ENCODE measurements at regions of chr12 and their contacts with region 1.

Region 1: DNA sequence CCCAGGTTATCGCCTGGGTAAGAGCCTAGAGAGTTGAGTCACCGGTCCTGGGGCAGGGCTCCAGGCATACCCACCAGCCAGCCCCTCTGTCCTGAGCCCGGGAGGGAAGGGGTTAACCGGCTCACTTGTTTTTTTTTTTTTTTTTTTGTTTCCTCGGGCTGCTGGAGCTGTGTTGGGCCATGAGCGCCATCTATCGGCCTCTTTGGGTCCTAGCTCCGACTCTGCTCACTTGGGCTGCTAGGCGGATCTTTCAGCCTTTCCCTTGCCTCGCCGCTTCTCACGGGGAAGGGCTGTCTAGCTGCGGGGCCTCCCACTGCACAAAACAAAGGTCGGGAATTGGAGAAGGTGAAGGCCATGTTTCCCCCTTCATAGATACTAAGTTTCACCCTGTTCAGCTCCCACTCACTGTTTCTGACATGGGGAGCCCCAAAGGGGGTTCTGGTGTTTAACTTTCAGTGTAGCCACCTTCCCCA is 2.8 kb upstream of the SMUG1 start:
- DNase-seq: peak; percentile 90
- ATAC-seq: peak; percentile 64
- H3K4me3 ChIP-seq: no peak overlapping the region
- H3K4me3 Mint-ChIP-seq: no peak overlapping the region
- H3K27ac ChIP-seq: no peak overlapping the region
- H3K27ac Mint-ChIP-seq: peak overlapping the region; percentile 61
- H3K4me1 ChIP-seq: peaks cover 27 to 42% of the 10 kb centered on the region in 2 donors
- H3K4me1 Mint-ChIP-seq: peaks cover 41% of the 10 kb centered on the region
- H3K27me3 ChIP-seq: peaks cover 0 to 42% (median 12%) of the 10 kb centered on the region in 4 experiments
- H3K27me3 Mint-ChIP-seq: peaks cover 35% of the 10 kb centered on the region
- CTCF ChIP-seq: peak; percentile 77

Region 2: GRCh38 chr12:53675651-53676453 is 515.7 kb before region 1 on chr12 and contains the start of gene ATP5MC2:
- CTCF ChIA-PET with region 1: no interaction called
- POLR2A ChIA-PET with region 1: no interaction called
- intact Hi-C with region 1: loop called (anchors 5 kb)
- DNase-seq: peak; percentile 99
- ATAC-seq: peak; percentile 98
- H3K4me3 ChIP-seq: peak within 1 kb of the TSS; percentile 84 to 96 (median 91)
- H3K4me3 Mint-ChIP-seq: peak within 1 kb of the TSS; percentile 96
- H3K27ac ChIP-seq: peak within 1 kb of the TSS; percentile 69 to 76
- H3K27ac Mint-ChIP-seq: peak within 1 kb of the TSS; percentile 91
- H3K4me1 ChIP-seq: peaks cover 16 to 21% of the 10 kb centered on the region in 2 donors
- H3K4me1 Mint-ChIP-seq: peaks cover 29% of the 10 kb centered on the region
- H3K27me3 ChIP-seq: peaks cover 0 to 26% (median 16%) of the 10 kb centered on the region in 4 experiments
- H3K27me3 Mint-ChIP-seq: peaks cover 15% of the 10 kb centered on the region
- CTCF ChIP-seq: peak; percentile 99
- total RNA-seq, gene ATP5MC2: 205 and 212 TPM in 2 replicates

Region 3: DNA sequence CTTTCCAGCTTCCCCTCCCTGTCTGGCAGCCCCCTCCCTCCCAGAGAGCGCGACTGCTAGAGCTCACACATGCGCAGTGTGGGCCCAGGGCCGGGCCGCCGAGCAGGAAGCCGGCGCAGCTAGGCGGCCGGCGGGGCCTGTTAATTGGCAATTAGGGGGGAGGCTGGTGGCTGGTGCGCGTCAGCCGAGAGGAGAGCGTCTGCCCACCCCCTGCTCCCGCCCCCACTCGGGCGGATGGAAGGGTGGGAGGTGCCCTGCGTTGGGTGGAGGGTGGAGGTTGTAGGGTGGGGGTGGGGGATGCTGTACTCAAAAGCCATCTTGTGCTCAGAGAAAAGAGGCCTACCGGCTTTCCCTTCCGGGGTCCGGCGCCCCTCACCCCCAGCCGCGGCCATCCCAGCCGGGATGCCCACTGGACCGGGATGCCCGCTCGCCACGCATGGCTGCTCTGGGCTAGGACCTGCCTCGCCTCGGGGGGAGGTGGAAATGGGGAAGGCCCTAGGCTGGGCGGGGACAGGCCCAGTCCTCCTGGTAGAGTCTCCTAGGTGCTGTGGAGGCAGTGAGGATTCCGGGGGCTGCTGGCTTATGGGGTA is 173.6 kb before region 1 on chr12:
- CTCF ChIA-PET with region 1: interaction called, 18 read pairs
- POLR2A ChIA-PET with region 1: no interaction called
- intact Hi-C with region 1: no loop called
- DNase-seq: peak; percentile 84
- ATAC-seq: peak; percentile 87
- H3K4me3 ChIP-seq: peak overlapping the region in 4 of 5 experiments; percentile 43 to 71 (median 48)
- H3K4me3 Mint-ChIP-seq: peak overlapping the region; percentile 90
- H3K27ac ChIP-seq: peak overlapping the region; percentile 30 to 40
- H3K27ac Mint-ChIP-seq: peak overlapping the region; percentile 83
- H3K4me1 ChIP-seq: peaks cover 25 to 42% of the 10 kb centered on the region in 2 donors
- H3K4me1 Mint-ChIP-seq: peaks cover 22% of the 10 kb centered on the region
- H3K27me3 ChIP-seq: peaks cover 0 to 93% (median 73%) of the 10 kb centered on the region in 4 experiments
- H3K27me3 Mint-ChIP-seq: peaks cover 63% of the 10 kb centered on the region
- CTCF ChIP-seq: no peak

Region 4: GRCh38 chr12:54053751-54054741 is 137.5 kb before region 1 on chr12 and contains the start of gene HOXC4:
- CTCF ChIA-PET with region 1: interaction called, 9 read pairs
- POLR2A ChIA-PET with region 1: interaction called, 8 read pairs
- intact Hi-C with region 1: loop called (anchors 1 kb)
- DNase-seq: peak; percentile 36
- ATAC-seq: peak; percentile 66
- H3K4me3 ChIP-seq: peak within 1 kb of the TSS in 4 of 5 experiments; percentile 69 to 78 (median 75)
- H3K4me3 Mint-ChIP-seq: peak within 1 kb of the TSS; percentile 91
- H3K27ac ChIP-seq: peak within 1 kb of the TSS; percentile 83 to 88
- H3K27ac Mint-ChIP-seq: peak within 1 kb of the TSS; percentile 95
- H3K4me1 ChIP-seq: peaks cover 36 to 42% of the 10 kb centered on the region in 2 donors
- H3K4me1 Mint-ChIP-seq: peaks cover 43% of the 10 kb centered on the region
- H3K27me3 ChIP-seq: peaks cover 0 to 63% (median 39%) of the 10 kb centered on the region in 4 experiments
- H3K27me3 Mint-ChIP-seq: peaks cover 56% of the 10 kb centered on the region
- CTCF ChIP-seq: no peak
- total RNA-seq, gene HOXC4: 6.4 and 6.5 TPM in 2 replicates

Region 5: GRCh38 chr12:54214553-54215406 is 23.2 kb after region 1 on chr12:
- CTCF ChIA-PET with region 1: interaction called, 118 read pairs
- POLR2A ChIA-PET with region 1: no interaction called
- intact Hi-C with region 1: loop called (anchors 1 kb)
- DNase-seq: peak; percentile 95
- ATAC-seq: peak; percentile 83
- H3K4me3 ChIP-seq: peak overlapping the region; percentile 3 to 58 (median 46)
- H3K4me3 Mint-ChIP-seq: peak overlapping the region; percentile 90
- H3K27ac ChIP-seq: no peak overlapping the region
- H3K27ac Mint-ChIP-seq: peak overlapping the region; percentile 33
- H3K4me1 ChIP-seq: peaks cover 36 to 46% of the 10 kb centered on the region in 2 donors
- H3K4me1 Mint-ChIP-seq: peaks cover 44% of the 10 kb centered on the region
- H3K27me3 ChIP-seq: peaks cover 0 to 30% (median 6%) of the 10 kb centered on the region in 4 experiments
- H3K27me3 Mint-ChIP-seq: peaks cover 6% of the 10 kb centered on the region
- CTCF ChIP-seq: peak; percentile 100

Region 6: GRCh38 chr12:54240971-54241588 is 49.5 kb after region 1 on chr12:
- CTCF ChIA-PET with region 1: no interaction called
- POLR2A ChIA-PET with region 1: no interaction called
- intact Hi-C with region 1: no loop called
- DNase-seq: no peak
- ATAC-seq: no peak
- H3K4me3 ChIP-seq: no peak overlapping the region
- H3K4me3 Mint-ChIP-seq: no peak overlapping the region
- H3K27ac ChIP-seq: no peak overlapping the region
- H3K27ac Mint-ChIP-seq: no peak overlapping the region
- H3K4me1 ChIP-seq: no peaks in the 10 kb centered on the region
- H3K4me1 Mint-ChIP-seq: peaks cover 2% of the 10 kb centered on the region
- H3K27me3 ChIP-seq: no peaks in the 10 kb centered on the region
- H3K27me3 Mint-ChIP-seq: no peaks in the 10 kb centered on the region
- CTCF ChIP-seq: no peak

Measured in B cell (primary cell).